Prostate gland (tissue), 2 donors: ENCODE measurements at regions of chr2 and their contacts with region 1.

Region 1: DNA sequence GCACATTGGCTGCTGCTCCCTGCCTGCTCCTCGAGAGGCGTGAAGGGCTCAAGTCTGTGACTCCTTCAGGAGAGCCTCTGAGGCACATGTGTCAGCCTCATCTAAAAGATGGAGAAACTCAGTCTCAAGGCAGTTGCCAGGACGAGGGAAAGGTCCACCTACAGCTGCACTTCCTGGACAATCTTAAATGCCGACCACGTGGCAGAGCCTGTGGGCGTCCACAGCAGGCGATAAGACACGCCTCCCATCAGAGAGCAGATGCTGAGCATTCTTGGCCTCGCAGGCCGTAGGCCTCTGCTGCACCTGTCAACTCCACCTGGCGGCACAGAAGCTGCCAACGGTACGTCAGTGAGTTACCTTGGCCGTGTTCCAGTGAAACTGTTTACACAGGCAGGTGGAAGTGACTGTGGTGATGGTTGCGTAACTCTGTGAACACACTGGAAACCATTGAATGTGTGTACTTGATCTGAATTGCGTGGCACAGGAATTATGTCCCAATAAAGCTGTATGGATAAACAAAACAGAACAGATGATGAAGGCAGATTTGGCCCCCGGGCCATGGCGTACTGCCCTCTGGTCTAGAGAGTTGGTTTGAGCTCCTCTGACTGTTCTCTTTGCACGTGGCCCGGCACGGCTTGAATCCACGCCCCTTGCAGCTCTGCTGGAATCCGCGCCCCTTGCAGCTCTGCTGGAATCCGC is 114.5 kb downstream of the RNF144A start:
- DNase-seq: peak; percentile 98
- H3K4me3 ChIP-seq: no peak overlapping the region
- H3K27ac ChIP-seq: peak overlapping the region; percentile 1 to 8
- H3K4me1 ChIP-seq: no peaks in the 10 kb centered on the region
- H3K27me3 ChIP-seq: no peaks in the 10 kb centered on the region
- CTCF ChIP-seq: peak in 3 of 4 experiments; percentile 24 to 62 (median 43)
- POLR2A ChIP-seq: no peak

Region 2: DNA sequence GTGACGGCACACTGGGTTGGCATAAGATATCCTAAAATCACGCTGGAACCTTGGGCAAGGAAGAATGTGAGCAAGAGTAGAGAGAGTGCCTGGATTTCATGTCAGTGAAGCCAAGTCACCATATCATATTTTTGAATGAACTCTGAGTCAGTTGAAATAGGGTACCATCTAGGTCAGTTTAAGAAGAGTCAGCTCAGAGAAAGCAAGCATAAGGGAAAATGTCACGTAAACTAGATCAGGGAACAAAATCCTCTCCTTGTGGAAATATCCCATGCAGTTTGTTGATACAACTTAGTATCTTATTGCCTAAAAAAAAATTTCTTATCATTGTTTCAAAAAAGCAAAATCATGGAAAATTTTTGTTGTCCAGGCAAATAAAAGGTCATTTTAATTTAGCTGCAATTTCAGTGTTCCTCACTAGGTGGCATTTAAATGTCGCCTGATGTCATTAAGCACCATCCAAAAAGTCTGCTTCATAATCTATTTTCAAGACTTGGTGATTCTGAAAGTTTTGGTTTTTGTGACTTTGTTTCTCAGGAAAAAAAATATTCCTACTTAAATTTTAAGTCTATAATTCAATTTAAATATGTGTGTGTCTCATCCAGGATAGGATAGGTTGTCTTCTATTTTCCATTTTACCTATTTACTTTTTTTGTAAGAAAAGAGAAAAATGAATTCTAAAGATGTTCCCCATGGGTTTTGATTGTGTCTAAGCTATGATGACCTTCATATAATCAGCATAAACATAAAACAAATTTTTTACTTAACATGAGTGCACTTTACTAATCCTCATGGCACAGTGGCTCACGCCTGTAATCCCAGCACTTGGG is 134.6 kb before region 1 on chr2:
- intact Hi-C with region 1: loop called (anchors 5 kb)
- DNase-seq: no peak
- H3K4me3 ChIP-seq: no peak overlapping the region
- H3K27ac ChIP-seq: no peak overlapping the region
- H3K4me1 ChIP-seq: no peaks in the 10 kb centered on the region
- H3K27me3 ChIP-seq: no peaks in the 10 kb centered on the region
- CTCF ChIP-seq: peak; percentile 29 to 85 (median 78)
- POLR2A ChIP-seq: no peak

Region 3: DNA sequence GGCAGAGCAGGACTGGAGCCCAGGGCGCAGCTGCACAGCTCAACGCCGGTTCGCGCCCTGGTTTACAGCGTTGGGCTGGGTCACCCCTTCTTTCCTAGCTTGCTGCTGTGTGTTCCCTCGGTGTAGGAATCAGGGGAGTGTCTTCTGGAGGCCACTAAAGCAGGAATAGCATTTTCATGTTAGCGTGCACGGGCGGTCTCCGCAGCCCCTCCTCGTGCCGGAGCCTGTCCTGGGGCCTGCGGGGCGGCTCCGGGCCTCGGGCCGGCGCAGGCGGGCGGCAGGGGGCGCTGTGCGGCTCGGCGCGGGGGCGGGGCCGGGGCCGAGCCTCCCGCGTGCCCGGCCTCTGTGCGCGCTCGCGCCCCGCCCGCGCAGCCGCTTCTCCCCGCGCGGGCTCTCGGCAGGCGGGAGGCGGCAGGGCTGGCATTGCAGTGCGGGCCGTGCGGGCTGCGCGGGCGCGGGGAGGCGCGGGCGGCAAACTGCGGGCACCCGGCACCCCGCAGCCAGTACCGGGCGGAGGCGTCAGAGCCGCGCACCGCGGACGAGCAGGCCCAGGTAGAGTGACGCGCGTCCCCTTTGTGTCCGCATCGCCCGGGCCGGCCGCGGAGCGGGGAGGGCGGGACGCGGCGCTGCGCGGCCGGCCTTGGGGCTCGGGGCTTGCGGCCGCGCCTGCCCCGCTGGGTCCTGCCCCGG is 114.5 kb before region 1 on chr2 and contains the start of gene RNF144A:
- intact Hi-C with region 1: loop called (anchors 5 kb)
- DNase-seq: peak; percentile 35
- H3K4me3 ChIP-seq: peak within 1 kb of the TSS; percentile 68 to 73
- H3K27ac ChIP-seq: peak within 1 kb of the TSS; percentile 64 to 67
- H3K4me1 ChIP-seq: peaks cover 2% of the 10 kb centered on the region
- H3K27me3 ChIP-seq: no peaks in the 10 kb centered on the region
- CTCF ChIP-seq: peak; percentile 30 to 53 (median 41)
- POLR2A ChIP-seq: peak; percentile 33
- total RNA-seq, gene RNF144A: 9.1 to 27.9 TPM

Region 4: DNA sequence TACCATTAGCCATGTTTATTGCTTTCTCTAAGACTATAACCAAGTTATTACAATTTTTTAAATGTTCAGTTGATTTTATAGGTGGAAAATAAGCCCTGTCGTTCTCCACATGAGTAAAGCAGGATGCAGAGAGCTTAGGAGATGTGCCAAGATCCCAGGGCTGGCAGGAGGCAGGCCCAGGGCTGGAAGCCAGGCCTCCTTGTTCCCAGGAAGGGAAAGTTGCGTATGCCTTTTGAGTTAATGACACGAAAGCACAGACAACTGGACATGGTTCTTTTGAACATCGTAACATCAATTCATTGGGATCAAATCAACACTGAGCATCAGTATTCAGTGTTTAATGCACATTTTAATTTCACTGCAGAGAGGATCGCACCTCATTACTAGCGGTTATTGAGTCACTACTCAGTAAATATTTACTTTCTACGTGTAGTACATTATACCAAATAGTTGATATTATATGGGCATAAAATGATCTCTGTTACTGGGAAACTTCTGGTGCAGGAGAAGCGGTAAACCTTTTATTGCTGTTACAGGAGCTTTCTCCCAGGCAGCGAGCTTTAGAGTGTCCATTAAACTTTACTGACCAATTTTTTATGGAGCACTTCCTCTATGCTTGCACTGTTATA is 54.5 kb before region 1 on chr2:
- intact Hi-C with region 1: loop called (anchors 5 kb)
- DNase-seq: peak; percentile 77
- H3K4me3 ChIP-seq: no peak overlapping the region
- H3K27ac ChIP-seq: peak overlapping the region; percentile 36 to 43
- H3K4me1 ChIP-seq: no peaks in the 10 kb centered on the region
- H3K27me3 ChIP-seq: no peaks in the 10 kb centered on the region
- CTCF ChIP-seq: no peak
- POLR2A ChIP-seq: no peak